GM23248 (cell line): ENCODE measurements at regions of chr14 and their contacts with region 1.

Region 1: GRCh38 chr14:64636208-64636979 is 67.8 kb upstream of the PLEKHG3 start:
- DNase-seq: peak; percentile 80
- H3K4me3 ChIP-seq: no peak overlapping the region
- H3K27ac ChIP-seq: no peak overlapping the region
- H3K4me1 ChIP-seq: peaks cover 8% of the 10 kb centered on the region
- H3K27me3 ChIP-seq: no peaks in the 10 kb centered on the region

Region 2: DNA sequence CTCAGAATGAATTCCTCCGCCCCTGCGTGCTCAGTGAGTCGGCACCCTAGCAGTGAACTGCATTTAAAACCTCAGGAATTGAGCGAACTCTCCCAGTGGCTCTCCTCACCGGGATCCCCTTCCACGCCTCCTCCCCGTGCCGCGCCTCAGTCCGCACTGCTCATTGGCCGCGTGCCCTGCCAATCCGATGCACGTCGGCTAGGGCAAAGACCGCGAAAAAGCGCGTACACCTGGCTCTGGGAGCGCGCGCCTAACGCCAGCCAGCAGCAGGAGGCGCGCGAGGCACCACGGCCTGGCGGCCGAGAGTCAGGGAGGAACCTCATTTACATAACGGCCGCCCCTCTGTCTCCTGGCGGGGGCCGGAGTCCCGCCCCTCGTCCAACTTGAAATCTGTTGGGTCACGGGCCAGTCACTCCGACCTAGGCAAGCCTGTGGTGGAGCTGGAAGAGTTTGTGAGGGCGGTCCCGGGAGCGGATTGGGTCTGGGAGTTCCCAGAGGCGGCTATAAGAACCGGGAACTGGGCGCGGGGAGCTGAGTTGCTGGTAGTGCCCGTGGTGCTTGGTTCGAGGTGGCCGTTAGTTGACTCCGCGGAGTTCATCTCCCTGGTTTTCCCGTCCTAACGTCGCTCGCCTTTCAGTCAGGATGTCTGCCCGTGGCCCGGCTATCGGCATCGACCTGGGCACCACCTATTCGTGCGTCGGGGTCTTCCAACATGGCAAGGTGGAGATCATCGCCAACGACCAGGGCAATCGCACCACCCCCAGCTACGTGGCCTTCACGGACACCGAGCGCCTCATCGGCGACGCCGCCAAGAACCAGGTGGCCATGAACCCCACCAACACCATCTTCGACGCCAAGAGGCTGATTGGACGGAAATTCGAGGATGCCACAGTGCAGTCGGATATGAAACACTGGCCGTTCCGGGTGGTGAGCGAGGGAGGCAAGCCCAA is 95.9 kb before region 1 on chr14 and contains the start of gene HSPA2:
- in situ Hi-C with region 1: loop called (anchors 10 kb)
- DNase-seq: peak; percentile 100
- H3K4me3 ChIP-seq: peak within 1 kb of the TSS; percentile 77
- H3K27ac ChIP-seq: peak within 1 kb of the TSS; percentile 92
- H3K4me1 ChIP-seq: peaks cover 28% of the 10 kb centered on the region
- H3K27me3 ChIP-seq: no peaks in the 10 kb centered on the region
- total RNA-seq, gene HSPA2: 28.1 and 28.9 TPM in 2 replicates

Region 3: DNA sequence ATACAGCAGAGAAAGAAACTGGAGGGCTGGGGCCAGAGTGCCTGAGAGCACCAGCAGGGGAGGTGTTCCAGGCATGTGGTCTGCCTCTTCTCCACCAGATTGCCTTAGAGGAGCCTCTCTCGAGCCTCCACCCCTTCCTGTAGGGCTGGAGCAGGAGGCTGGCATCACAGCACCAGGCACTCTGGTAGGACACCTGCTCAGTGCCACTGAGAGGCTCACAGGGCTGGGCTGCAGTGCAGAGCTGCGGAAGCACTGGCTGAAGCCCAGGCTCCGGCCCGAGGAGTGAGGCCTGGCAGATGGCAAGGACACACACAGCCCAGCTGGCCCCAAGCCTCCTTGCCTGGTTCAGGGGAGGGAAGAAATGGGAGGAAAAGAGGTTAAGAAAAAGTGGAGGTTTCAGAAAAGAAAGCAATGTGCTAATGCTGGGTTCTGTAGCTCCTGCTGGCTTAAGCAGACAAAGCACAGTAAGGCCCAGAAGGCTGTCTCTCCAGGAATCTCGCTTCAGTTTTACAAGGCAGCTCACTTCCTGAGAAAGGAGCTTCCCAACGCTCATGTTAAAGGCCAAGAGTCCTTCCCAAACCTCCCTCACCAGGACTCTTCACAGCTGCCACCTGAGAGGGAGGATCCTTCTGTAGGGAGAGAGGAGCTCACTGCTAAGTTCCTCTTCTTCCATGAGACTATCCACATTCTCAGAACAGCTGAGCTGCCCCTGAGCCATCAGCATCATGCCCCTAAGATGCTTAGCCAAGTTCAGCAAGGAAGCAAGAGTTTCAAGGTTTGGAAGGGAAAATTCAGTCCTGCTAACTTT is 219.5 kb after region 1 on chr14:
- in situ Hi-C with region 1: no loop called
- DNase-seq: no peak
- H3K4me3 ChIP-seq: no peak overlapping the region
- H3K27ac ChIP-seq: no peak overlapping the region
- H3K4me1 ChIP-seq: no peaks in the 10 kb centered on the region
- H3K27me3 ChIP-seq: peaks cover 63% of the 10 kb centered on the region